ENCODE measurements at regions of chr4 and their contacts with region 1.

Region 1: DNA sequence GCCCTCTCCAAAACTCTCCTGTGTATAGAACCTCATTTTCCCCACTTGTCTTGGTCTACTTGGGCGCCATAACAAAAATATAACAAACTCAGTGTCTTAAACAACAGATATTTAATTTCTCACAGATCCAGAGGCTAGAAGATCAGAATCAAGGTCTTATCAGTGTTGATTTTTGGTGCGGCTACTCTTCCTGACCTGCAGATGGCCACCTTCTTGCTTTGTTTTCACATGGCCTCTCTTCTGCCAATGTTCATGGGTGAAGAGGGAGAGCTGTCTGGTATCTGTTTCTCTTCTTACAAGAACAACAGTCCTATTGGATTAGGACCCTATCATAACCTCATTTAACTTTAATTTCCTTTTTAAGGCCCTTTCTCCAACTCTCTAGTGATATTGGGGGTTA is 177.3 kb downstream of the PABPC4L start:
- DNase-seq: peak; percentile 18 to 38
- H3K4me3 ChIP-seq: no peak overlapping the region
- H3K4me3 Mint-ChIP-seq: no peak overlapping the region
- H3K27ac Mint-ChIP-seq: no peak overlapping the region
- H3K4me1 ChIP-seq: no peaks in the 10 kb centered on the region
- H3K4me1 Mint-ChIP-seq: no peaks in the 10 kb centered on the region
- H3K27me3 ChIP-seq: no peaks in the 10 kb centered on the region
- H3K27me3 Mint-ChIP-seq: no peaks in the 10 kb centered on the region
- CTCF ChIP-seq: peak; percentile 43 to 44

Region 2: GRCh38 chr4:133943081-133943480 is 81.2 kb before region 1 on chr4:
- CTCF ChIA-PET with region 1: no interaction called
- POLR2A ChIA-PET with region 1: no interaction called
- intact Hi-C with region 1: no loop called
- DNase-seq: no peak
- H3K4me3 ChIP-seq: no peak overlapping the region
- H3K4me3 Mint-ChIP-seq: no peak overlapping the region
- H3K27ac Mint-ChIP-seq: no peak overlapping the region
- H3K4me1 ChIP-seq: peaks cover 6% of the 10 kb centered on the region; the same call in 1 of the 2 replicates
- H3K4me1 Mint-ChIP-seq: peaks cover 7% of the 10 kb centered on the region
- H3K27me3 ChIP-seq: no peaks in the 10 kb centered on the region
- H3K27me3 Mint-ChIP-seq: no peaks in the 10 kb centered on the region
- CTCF ChIP-seq: no peak

Region 3: GRCh38 chr4:133969202-133969848 is 54.9 kb before region 1 on chr4:
- CTCF ChIA-PET with region 1: no interaction called
- POLR2A ChIA-PET with region 1: no interaction called
- intact Hi-C with region 1: no loop called
- DNase-seq: no peak
- H3K4me3 ChIP-seq: no peak overlapping the region
- H3K4me3 Mint-ChIP-seq: no peak overlapping the region
- H3K27ac Mint-ChIP-seq: no peak overlapping the region
- H3K4me1 ChIP-seq: no peaks in the 10 kb centered on the region
- H3K4me1 Mint-ChIP-seq: no peaks in the 10 kb centered on the region
- H3K27me3 ChIP-seq: no peaks in the 10 kb centered on the region
- H3K27me3 Mint-ChIP-seq: no peaks in the 10 kb centered on the region
- CTCF ChIP-seq: no peak

Region 4: DNA sequence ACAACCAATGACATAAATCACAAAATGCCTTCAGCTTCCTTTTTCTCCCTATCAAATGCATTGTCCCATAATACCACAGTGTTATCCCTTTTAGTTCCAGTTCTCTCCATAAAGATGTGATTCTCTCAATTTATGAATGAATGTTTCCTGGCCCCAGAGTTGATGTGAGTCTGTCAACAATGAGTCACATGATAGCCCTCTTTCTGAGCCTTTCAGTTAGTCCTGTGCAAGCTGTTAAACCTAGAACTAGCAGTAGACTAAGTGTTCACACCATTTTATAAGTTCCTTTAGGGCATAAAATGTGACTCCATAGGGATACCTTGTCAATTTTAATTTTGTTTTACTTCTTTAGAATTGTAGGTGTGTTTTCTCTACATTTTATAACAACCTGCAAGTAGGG is 47.9 kb after region 1 on chr4:
- CTCF ChIA-PET with region 1: no interaction called
- POLR2A ChIA-PET with region 1: no interaction called
- intact Hi-C with region 1: loop called (anchors 2 kb)
- DNase-seq: no peak
- H3K4me3 ChIP-seq: no peak overlapping the region
- H3K4me3 Mint-ChIP-seq: no peak overlapping the region
- H3K27ac Mint-ChIP-seq: no peak overlapping the region
- H3K4me1 ChIP-seq: no peaks in the 10 kb centered on the region
- H3K4me1 Mint-ChIP-seq: no peaks in the 10 kb centered on the region
- H3K27me3 ChIP-seq: no peaks in the 10 kb centered on the region
- H3K27me3 Mint-ChIP-seq: no peaks in the 10 kb centered on the region
- CTCF ChIP-seq: no peak

Region 5: DNA sequence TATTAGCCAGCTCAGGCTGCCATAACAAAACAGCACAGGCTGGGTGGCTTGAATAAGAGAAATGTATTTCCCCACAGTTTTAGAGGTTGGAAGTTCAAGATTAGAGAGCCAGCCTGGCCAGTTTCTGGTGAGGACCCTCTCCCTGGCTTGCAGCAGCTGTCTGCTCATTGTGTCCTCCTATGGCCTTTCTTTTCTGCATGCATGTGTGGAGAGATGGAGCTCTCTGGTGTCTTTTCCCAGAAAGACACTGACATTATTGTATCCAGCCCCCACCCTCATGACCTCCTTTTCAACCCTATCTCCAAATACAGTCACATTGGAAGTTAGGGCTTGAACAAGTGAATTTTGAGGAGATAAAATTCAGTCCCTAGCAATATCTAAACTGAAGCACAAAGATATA is 441.2 kb after region 1 on chr4:
- CTCF ChIA-PET with region 1: no interaction called
- POLR2A ChIA-PET with region 1: no interaction called
- intact Hi-C with region 1: loop called (anchors 10 kb)
- DNase-seq: peak in 1 of 2 experiments; percentile 1
- H3K4me3 ChIP-seq: no peak overlapping the region
- H3K4me3 Mint-ChIP-seq: no peak overlapping the region
- H3K27ac Mint-ChIP-seq: no peak overlapping the region
- H3K4me1 ChIP-seq: no peaks in the 10 kb centered on the region
- H3K4me1 Mint-ChIP-seq: no peaks in the 10 kb centered on the region
- H3K27me3 ChIP-seq: no peaks in the 10 kb centered on the region
- H3K27me3 Mint-ChIP-seq: no peaks in the 10 kb centered on the region
- CTCF ChIP-seq: peak in 1 of 2 experiments; percentile 10